AG04450 (cell line): ENCODE measurements at regions of chr15 and their contacts with region 1.

Region 1: DNA sequence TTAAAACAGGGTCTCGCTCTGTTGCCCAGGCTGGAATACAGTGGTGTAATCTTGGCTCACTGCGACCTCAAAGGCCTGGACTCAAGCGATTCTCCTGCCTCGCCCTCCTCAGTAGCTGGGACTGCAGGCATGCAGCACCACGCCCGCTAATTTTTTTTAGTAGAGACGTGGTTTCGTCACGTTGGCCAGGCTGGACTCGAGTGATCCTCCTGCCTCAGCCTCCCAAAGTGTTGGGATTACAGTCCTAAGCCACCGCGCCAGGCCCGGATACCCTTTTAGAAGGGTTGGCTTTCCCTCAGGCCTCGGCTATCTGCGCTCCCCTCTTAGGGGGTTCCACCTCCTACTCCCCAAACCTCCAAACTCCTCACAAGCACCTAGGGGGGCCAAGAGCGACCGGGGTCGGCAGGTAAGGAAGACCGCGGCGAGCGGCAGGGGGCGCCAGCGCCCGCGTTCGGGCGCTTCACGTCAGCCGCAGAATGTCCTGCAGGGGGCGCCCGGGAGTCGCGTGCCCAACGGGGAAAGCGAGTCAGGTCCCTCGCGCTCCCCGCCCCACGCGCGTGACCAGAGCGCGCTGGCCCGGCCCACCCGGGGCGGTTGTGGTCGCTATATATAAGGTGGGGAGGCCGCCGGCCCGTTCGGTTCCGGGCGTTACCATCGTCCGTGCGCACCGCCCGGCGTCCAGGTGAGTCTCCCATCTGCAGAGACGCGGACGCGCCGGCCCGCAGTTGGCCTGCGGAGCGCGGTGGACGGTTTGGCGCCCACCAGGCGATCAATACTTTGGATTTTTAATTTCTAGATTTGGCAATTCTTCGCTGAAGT is 51.8 kb upstream of the GATM start:
- DNase-seq: peak; percentile 10
- H3K4me3 ChIP-seq: peak overlapping the region; percentile 59
- H3K27ac ChIP-seq: no peak overlapping the region
- H3K27me3 ChIP-seq: peaks cover 3% of the 10 kb centered on the region
- CTCF ChIP-seq: peak; percentile 100

Region 2: GRCh38 chr15:44882499-44882968 is 547.6 kb before region 1 on chr15:
- CTCF ChIA-PET with region 1: no interaction called
- POLR2A ChIA-PET with region 1: no interaction called
- DNase-seq: no peak
- H3K4me3 ChIP-seq: no peak overlapping the region
- H3K27ac ChIP-seq: no peak overlapping the region
- H3K27me3 ChIP-seq: no peaks in the 10 kb centered on the region
- CTCF ChIP-seq: no peak

Region 3: DNA sequence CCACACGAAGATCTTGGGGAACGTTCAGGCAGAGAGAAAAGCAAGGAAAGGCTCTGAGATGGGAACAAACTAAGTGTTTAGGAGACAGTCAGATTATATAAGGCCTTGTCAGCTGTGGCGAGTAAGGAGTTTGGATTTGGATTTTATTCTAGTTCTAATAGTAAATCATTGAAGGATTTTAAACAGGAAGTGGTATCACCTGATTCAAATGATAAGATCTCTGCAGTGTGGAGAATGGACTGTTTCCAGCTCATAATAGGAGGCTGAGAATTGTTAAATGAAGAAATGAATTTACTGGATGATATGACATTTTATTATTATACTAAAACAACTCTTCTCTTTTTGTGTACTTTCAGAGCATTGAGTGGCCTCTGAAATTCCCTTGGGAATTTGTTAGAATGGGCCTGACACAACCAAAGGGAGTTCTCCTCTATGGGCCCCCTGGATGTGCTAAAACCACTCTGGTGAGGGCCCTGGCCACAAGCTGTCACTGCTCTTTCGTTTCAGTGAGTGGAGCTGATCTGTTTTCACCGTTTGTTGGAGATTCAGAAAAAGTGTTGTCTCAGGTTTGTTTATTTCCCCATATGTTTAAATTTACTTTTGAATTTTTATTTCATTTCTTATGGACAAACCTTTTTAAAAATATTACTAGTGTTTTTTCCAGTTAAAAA is 15.8 kb before region 1 on chr15:
- CTCF ChIA-PET with region 1: interaction called, 19 read pairs
- POLR2A ChIA-PET with region 1: no interaction called
- DNase-seq: no peak
- H3K4me3 ChIP-seq: no peak overlapping the region
- H3K27ac ChIP-seq: no peak overlapping the region
- H3K27me3 ChIP-seq: no peaks in the 10 kb centered on the region
- CTCF ChIP-seq: no peak

Region 4: GRCh38 chr15:45449916-45450867 is 20.0 kb after region 1 on chr15:
- CTCF ChIA-PET with region 1: interaction called, 376 read pairs
- POLR2A ChIA-PET with region 1: no interaction called
- DNase-seq: no peak
- H3K4me3 ChIP-seq: no peak overlapping the region
- H3K27ac ChIP-seq: no peak overlapping the region
- H3K27me3 ChIP-seq: no peaks in the 10 kb centered on the region
- CTCF ChIP-seq: no peak

Region 5: GRCh38 chr15:45587095-45587860 is 157.1 kb after region 1 on chr15 and contains the start of gene BLOC1S6:
- CTCF ChIA-PET with region 1: interaction called, 12 read pairs
- POLR2A ChIA-PET with region 1: no interaction called
- DNase-seq: peak; percentile 74
- H3K4me3 ChIP-seq: peak within 1 kb of the TSS; percentile 88
- H3K27ac ChIP-seq: peak within 1 kb of the TSS; percentile 100
- H3K27me3 ChIP-seq: no peaks in the 10 kb centered on the region
- CTCF ChIP-seq: no peak
- polyA plus RNA-seq, gene BLOC1S6: 29.9 and 39.0 TPM in 2 replicates

Region 6: GRCh38 chr15:45611305-45611704 is 181.1 kb after region 1 on chr15:
- CTCF ChIA-PET with region 1: interaction called, 75 read pairs
- POLR2A ChIA-PET with region 1: no interaction called
- DNase-seq: no peak
- H3K4me3 ChIP-seq: no peak overlapping the region
- H3K27ac ChIP-seq: no peak overlapping the region
- H3K27me3 ChIP-seq: no peaks in the 10 kb centered on the region
- CTCF ChIP-seq: peak; percentile 52